Caco-2 (cell line): ENCODE measurements at regions of chr11 and their contacts with region 1.

Region 1: GRCh38 chr11:10287766-10288715 is 6.0 kb downstream of the SBF2 start:
- DNase-seq: no peak
- H3K4me3 ChIP-seq: no peak overlapping the region
- H3K4me3 Mint-ChIP-seq: no peak overlapping the region
- H3K27ac Mint-ChIP-seq: no peak overlapping the region
- H3K4me1 ChIP-seq: peaks cover 17% of the 10 kb centered on the region
- H3K4me1 Mint-ChIP-seq: no peaks in the 10 kb centered on the region
- H3K27me3 ChIP-seq: no peaks in the 10 kb centered on the region
- H3K27me3 Mint-ChIP-seq: no peaks in the 10 kb centered on the region
- CTCF ChIP-seq: no peak

Region 2: DNA sequence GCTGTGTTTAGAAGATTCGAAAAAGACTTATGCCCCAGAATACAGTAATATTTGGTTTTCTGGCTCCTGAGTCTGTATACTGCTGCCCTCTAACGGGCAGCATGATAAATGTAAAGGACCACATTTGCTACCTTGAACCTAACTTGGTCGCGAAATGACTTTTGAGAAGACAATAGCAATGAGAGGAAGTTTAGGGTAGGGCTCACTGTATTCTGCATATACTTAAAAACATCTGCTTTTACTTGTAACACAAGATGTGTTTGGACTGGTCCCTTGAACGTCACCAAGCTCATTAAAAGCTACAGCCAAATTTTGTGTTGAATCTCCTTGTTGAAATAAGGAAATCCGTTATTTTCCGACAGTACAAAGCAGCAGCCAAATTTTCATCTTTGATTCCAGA is 315.1 kb before region 1 on chr11:
- CTCF ChIA-PET with region 1: no interaction called
- POLR2A ChIA-PET with region 1: no interaction called
- intact Hi-C with region 1: no loop called
- DNase-seq: peak in 1 of 2 experiments; percentile 41
- H3K4me3 ChIP-seq: no peak overlapping the region
- H3K4me3 Mint-ChIP-seq: no peak overlapping the region
- H3K27ac Mint-ChIP-seq: no peak overlapping the region
- H3K4me1 ChIP-seq: peaks cover 18% of the 10 kb centered on the region
- H3K4me1 Mint-ChIP-seq: peaks cover 6% of the 10 kb centered on the region
- H3K27me3 ChIP-seq: no peaks in the 10 kb centered on the region
- H3K27me3 Mint-ChIP-seq: no peaks in the 10 kb centered on the region
- CTCF ChIP-seq: peak; percentile 62 to 82

Region 3: DNA sequence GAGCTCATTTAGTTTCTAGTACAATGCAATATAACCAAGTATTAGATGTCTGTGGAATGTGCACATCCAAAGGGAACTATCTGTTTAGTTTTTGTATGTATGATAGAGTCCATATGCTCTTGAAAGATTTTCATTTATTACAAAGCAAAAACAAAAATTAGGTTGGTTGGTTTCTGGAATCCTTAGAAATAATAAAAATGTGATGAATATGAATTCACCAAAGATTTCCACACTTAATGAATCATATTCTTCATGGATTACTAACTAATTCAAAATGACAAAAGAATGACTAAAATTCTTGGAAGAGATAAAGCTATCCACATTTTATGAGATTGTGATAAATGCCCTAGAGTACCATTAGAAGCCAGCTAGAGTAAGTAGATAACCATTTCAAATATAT is 255.1 kb before region 1 on chr11:
- CTCF ChIA-PET with region 1: no interaction called
- POLR2A ChIA-PET with region 1: interaction called, 10 read pairs
- intact Hi-C with region 1: no loop called
- DNase-seq: no peak
- H3K4me3 ChIP-seq: no peak overlapping the region
- H3K4me3 Mint-ChIP-seq: no peak overlapping the region
- H3K27ac Mint-ChIP-seq: no peak overlapping the region
- H3K4me1 ChIP-seq: no peaks in the 10 kb centered on the region
- H3K4me1 Mint-ChIP-seq: no peaks in the 10 kb centered on the region
- H3K27me3 ChIP-seq: no peaks in the 10 kb centered on the region
- H3K27me3 Mint-ChIP-seq: no peaks in the 10 kb centered on the region
- CTCF ChIP-seq: no peak